Sigmoid colon (tissue), 7 donors: ENCODE measurements at regions of chr7 and their contacts with region 1.

Region 1: DNA sequence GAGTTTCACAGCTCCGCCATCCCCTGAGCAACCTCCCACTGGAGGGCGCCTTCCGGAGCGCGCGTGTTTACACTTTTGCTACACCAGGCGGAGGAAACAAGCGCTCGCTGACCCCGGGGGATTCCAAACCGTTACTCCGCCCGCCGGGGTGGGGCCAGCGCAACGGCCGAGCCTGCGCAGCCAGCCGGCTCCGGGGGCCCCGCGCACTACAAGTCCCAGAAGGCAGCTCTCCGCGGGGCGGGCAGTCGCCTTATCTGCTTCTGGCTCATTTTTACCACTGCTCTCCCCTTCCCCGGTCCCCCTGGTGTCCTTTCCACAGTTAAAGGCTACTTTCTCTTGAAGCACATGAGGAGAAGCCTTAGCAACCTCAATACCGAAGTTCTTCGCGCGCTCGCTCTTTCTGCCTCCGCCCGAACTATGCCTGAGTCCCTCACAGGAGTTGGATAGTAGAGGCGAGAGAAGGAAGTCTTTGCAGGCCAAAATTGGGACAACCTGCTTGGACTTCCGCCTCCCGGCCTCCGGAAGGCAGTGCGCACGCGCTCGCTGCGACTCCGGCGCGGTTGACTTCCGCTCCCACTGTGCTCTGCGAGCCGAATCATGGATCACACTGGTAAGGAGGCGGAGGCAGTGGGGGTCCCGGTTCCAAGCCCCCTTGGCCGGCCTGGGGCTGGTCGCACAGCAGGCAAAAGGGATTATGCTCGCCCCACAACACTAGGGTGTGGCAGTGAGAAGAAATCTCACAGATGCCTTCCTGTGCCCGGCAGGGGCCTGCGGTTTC is at the start of gene CBLL1:
- DNase-seq: peak; percentile 98
- H3K4me3 ChIP-seq: peak within 1 kb of the TSS; percentile 72 to 91 (median 82)
- H3K27ac ChIP-seq: peak within 1 kb of the TSS; percentile 84 to 97 (median 92)
- H3K4me1 ChIP-seq: peaks cover 0 to 49% (median 40%) of the 10 kb centered on the region in 4 donors
- H3K27me3 ChIP-seq: no peaks in the 10 kb centered on the region
- CTCF ChIP-seq: peak; percentile 52 to 86 (median 74)
- EP300 ChIP-seq: no peak
- POLR2A ChIP-seq: peak; percentile 39 to 86
- total RNA-seq, gene CBLL1: 25.2 to 47.4 (median 38.9) TPM

Region 2: GRCh38 chr7:107785926-107786325 is 42.2 kb after region 1 on chr7:
- intact Hi-C with region 1: no loop called
- DNase-seq: peak; percentile 86
- H3K4me3 ChIP-seq: peak overlapping the region in 2 of 4 donors; percentile 2 to 15
- H3K27ac ChIP-seq: peak overlapping the region; percentile 76 to 87 (median 82)
- H3K4me1 ChIP-seq: peaks cover 0 to 77% (median 57%) of the 10 kb centered on the region in 4 donors
- H3K27me3 ChIP-seq: no peaks in the 10 kb centered on the region
- CTCF ChIP-seq: no peak
- EP300 ChIP-seq: peak; percentile 89 to 99 (median 97)
- POLR2A ChIP-seq: no peak

Region 3: DNA sequence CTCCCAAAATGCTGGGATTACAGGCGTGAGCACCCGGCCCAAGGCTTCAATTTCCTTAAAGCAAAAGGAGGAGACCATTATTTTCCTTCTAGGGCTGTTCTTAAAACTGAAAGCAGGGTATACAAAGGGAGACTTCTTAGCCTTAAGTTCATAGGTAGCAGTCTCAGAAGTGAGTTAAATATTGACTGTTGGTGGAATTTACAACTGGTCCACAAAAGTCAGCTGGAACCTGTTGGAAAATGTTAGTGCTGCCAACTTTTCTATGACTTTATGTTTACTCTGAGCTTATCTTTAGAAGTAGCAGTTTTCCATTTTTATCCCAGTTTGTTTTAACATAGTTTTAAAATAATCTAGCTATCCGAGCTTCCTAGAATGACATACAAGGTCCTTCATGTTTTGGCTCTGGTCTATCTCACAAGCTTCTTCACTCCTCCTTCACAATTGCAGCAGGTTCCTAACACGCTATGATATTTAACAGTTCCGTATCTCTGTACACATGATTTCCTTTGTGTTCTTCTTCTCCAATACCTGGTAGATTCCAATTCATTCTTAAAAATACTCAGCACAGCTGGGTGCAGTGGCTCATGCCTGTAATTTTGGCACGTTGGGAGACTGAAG is 56.0 kb after region 1 on chr7:
- intact Hi-C with region 1: no loop called
- DNase-seq: no peak
- H3K4me3 ChIP-seq: no peak overlapping the region
- H3K27ac ChIP-seq: peak overlapping the region; percentile 72 to 83 (median 80)
- H3K4me1 ChIP-seq: peaks cover 0 to 39% (median 27%) of the 10 kb centered on the region in 4 donors
- H3K27me3 ChIP-seq: no peaks in the 10 kb centered on the region
- CTCF ChIP-seq: no peak
- EP300 ChIP-seq: peak; percentile 50 to 83 (median 64)
- POLR2A ChIP-seq: no peak

Region 4: GRCh38 chr7:107810626-107811025 is 66.9 kb after region 1 on chr7:
- intact Hi-C with region 1: no loop called
- DNase-seq: no peak
- H3K4me3 ChIP-seq: no peak overlapping the region
- H3K27ac ChIP-seq: peak overlapping the region; percentile 79 to 83 (median 82)
- H3K4me1 ChIP-seq: peaks cover 0 to 27% (median 17%) of the 10 kb centered on the region in 4 donors
- H3K27me3 ChIP-seq: no peaks in the 10 kb centered on the region
- CTCF ChIP-seq: no peak
- EP300 ChIP-seq: no peak
- POLR2A ChIP-seq: no peak

Region 5: GRCh38 chr7:108146070-108146837 is 402.5 kb after region 1 on chr7:
- intact Hi-C with region 1: loop called (anchors 5 kb)
- DNase-seq: peak; percentile 78
- H3K4me3 ChIP-seq: peak overlapping the region in 3 of 4 donors; percentile 13 to 31 (median 28)
- H3K27ac ChIP-seq: peak overlapping the region in 2 of 4 donors; percentile 16 to 41
- H3K4me1 ChIP-seq: peaks cover 0 to 26% (median 16%) of the 10 kb centered on the region in 4 donors
- H3K27me3 ChIP-seq: no peaks in the 10 kb centered on the region
- CTCF ChIP-seq: peak; percentile 80 to 93 (median 88)
- EP300 ChIP-seq: no peak
- POLR2A ChIP-seq: no peak